GM23248 (cell line): ENCODE measurements at regions of chr15 and their contacts with region 1.

Region 1: GRCh38 chr15:90161950-90162361 is 39.2 kb upstream of the SEMA4B start:
- DNase-seq: no peak
- H3K4me3 ChIP-seq: no peak overlapping the region
- H3K27ac ChIP-seq: no peak overlapping the region
- H3K4me1 ChIP-seq: peaks cover 21% of the 10 kb centered on the region
- H3K27me3 ChIP-seq: no peaks in the 10 kb centered on the region

Region 2: GRCh38 chr15:89863918-89864317 is 298.0 kb before region 1 on chr15:
- in situ Hi-C with region 1: no loop called
- DNase-seq: no peak
- H3K4me3 ChIP-seq: no peak overlapping the region
- H3K27ac ChIP-seq: no peak overlapping the region
- H3K4me1 ChIP-seq: 0 out of 2 replicates have a peak, but pooled peaks cover 5% of the 10 kb centered on the region
- H3K27me3 ChIP-seq: no peaks in the 10 kb centered on the region

Region 3: DNA sequence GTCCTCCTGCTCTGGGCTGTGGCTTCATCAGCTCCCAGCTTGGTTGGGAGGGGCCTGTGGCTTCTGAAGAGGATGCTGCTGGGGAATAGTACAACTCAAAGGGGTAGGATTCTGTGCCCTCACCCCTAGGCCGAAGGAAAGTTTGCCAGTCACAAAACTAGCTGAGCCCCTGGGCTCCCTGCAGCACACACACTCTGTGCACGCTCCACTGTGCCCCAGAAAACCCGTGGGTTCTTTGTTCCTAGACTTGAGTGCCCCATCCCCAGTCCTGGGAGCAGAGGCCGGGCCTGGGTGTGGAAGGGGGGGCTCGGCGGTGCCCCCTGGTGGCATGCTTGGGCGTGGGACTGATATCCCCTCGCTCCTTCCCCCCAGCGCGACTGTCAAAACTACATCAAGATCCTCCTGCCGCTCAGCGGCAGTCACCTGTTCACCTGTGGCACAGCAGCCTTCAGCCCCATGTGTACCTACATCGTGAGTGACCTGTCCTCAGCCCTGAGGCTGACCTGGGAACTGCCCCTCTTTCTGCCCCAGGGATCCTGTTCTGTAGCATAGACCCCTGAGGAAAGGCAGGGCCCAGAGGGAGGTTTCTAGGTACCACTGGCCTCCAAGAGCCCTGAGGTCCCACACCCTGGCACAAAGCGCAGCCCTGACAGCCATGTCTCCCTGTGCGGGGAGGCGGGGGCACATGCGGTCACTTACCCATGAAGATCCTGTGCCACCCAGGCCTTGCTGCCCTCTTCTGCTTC is 57.6 kb after region 1 on chr15:
- in situ Hi-C with region 1: loop called (anchors 5 kb)
- DNase-seq: peak; percentile 53
- H3K4me3 ChIP-seq: no peak overlapping the region
- H3K27ac ChIP-seq: no peak overlapping the region
- H3K4me1 ChIP-seq: no peaks in the 10 kb centered on the region
- H3K27me3 ChIP-seq: no peaks in the 10 kb centered on the region